HepG2 (cell line): ENCODE measurements at regions of chr3 and their contacts with region 1.

Region 1: GRCh38 chr3:140736863-140737460 is 59.1 kb downstream of the TRIM42 start:
- DNase-seq: peak; percentile 59
- ATAC-seq: peak; percentile 97
- H3K4me3 ChIP-seq: no peak overlapping the region
- H3K27ac ChIP-seq: no peak overlapping the region
- H3K4me1 ChIP-seq: 0 out of 2 replicates have a peak, but pooled peaks cover 12% of the 10 kb centered on the region
- H3K27me3 ChIP-seq: no peaks in the 10 kb centered on the region; a peak in 1 of 5 replicates
- CTCF ChIP-seq: peak; percentile 92
- EP300 ChIP-seq: no peak
- POLR2A ChIP-seq: no peak
- RAD21 ChIP-seq: peak; percentile 95

Region 2: DNA sequence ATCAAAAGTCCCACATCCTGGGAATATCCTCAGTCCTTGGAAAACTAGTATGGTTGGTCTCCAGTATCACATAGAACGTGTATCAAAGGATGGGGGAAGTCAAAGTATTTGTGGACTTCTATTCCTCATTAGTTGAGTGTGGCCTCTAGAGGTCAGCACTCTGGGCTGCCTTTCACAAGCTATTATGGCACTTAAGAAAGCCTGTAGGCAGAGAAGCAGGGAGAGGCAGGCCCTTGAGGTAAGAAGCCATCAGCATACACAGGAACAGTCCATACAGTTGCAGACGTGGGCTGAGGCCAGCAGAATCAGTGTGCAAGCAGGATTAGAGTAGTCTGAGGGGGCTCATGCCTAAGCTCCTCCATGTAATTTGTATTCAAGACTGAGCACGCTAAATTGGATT is 460.3 kb before region 1 on chr3:
- CTCF ChIA-PET with region 1: interaction called, 3 read pairs
- POLR2A ChIA-PET with region 1: no interaction called
- in situ Hi-C with region 1: no loop called
- intact Hi-C with region 1: loop called (anchors 1 kb)
- DNase-seq: peak; percentile 9
- ATAC-seq: peak; percentile 58
- H3K4me3 ChIP-seq: no peak overlapping the region
- H3K27ac ChIP-seq: no peak overlapping the region
- H3K4me1 ChIP-seq: no peaks in the 10 kb centered on the region
- H3K27me3 ChIP-seq: 0 out of 5 replicates have a peak, but pooled peaks cover 0 to 4% of the 10 kb centered on the region in 2 experiments
- CTCF ChIP-seq: peak; percentile 48
- EP300 ChIP-seq: no peak
- POLR2A ChIP-seq: no peak
- RAD21 ChIP-seq: no peak

Region 3: DNA sequence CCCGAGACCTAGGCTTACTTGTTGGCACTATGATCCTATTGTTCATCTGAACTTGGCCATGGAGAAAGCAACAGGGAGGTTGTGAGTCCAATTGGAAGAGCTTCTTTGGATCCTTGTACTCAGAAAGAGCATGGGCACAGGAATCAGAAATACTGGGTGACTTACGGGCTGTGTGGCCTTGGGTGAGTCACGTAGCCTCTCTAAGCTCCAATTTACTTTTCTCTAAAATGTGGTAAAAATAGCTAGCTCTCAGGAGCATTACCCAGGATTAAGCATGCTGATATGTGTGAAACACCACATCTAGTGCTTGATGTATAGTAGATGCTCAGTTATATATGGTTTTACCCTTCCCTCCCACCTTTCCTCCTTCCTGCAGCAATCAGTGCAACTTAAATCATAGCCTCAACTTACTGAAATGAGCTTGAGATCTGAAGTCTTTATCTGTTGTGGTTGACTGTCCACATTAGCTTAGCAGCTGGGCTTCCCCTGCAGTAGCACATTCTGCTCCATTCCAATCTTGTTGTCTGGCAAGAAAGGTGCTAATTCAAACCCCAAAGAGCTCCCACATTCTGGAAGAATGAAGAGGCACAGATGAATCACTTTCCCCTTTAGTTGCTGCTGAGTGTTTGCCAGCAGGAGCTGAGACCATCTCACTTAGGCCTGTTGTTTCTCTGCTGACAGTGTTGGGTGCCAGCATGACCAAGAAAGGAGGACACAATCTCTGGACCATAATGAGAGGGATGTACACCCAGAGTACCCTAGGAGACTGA is 358.2 kb before region 1 on chr3:
- CTCF ChIA-PET with region 1: no interaction called
- POLR2A ChIA-PET with region 1: no interaction called
- in situ Hi-C with region 1: no loop called
- intact Hi-C with region 1: loop called (anchors 5 kb)
- DNase-seq: no peak
- ATAC-seq: no peak
- H3K4me3 ChIP-seq: no peak overlapping the region
- H3K27ac ChIP-seq: no peak overlapping the region
- H3K4me1 ChIP-seq: no peaks in the 10 kb centered on the region
- H3K27me3 ChIP-seq: no peaks in the 10 kb centered on the region
- CTCF ChIP-seq: no peak
- EP300 ChIP-seq: no peak
- POLR2A ChIP-seq: no peak
- RAD21 ChIP-seq: no peak

Region 4: DNA sequence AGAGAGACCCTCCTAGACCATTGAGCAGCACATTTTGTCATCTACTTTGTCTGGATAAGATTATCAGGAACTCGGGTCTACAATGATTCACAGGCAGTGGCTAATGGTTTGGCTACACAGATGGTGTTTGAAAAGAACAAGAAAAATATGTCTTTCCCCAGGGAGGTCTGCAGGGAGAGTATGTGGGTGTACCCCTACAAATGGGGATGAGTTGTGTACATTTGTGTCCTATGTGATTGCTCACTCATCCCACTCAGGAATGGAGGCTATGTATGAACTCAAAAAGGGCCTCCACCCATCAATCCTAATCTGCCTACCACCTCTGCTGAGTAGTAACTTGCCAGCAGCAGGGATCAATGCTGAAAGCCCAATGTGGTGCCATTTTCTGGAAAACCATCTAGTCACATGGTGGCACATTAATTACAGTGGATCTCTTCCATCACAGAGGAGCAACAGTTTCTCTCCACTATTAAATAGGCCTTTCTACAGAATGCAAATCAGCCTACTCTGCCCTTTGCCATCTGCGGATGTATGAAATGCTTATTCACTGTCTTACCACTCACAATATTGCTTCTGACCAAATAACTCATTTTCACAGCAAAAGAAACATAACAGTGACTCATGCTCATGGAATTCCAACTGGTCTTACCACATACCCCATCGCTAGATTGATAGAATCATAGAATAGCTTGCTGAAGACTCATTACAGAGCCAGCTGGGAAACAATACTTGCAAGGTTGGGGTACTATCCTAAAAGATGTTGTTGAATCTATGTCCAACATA is 107.4 kb before region 1 on chr3:
- CTCF ChIA-PET with region 1: interaction called, 3 read pairs
- POLR2A ChIA-PET with region 1: no interaction called
- in situ Hi-C with region 1: loop called (anchors 10 kb)
- intact Hi-C with region 1: no loop called
- DNase-seq: peak; percentile 17
- ATAC-seq: no peak
- H3K4me3 ChIP-seq: no peak overlapping the region
- H3K27ac ChIP-seq: no peak overlapping the region
- H3K4me1 ChIP-seq: no peaks in the 10 kb centered on the region
- H3K27me3 ChIP-seq: no peaks in the 10 kb centered on the region
- CTCF ChIP-seq: no peak
- EP300 ChIP-seq: no peak
- POLR2A ChIP-seq: no peak
- RAD21 ChIP-seq: no peak

Region 5: GRCh38 chr3:140703496-140703895 is 33.5 kb before region 1 on chr3:
- CTCF ChIA-PET with region 1: no interaction called
- POLR2A ChIA-PET with region 1: no interaction called
- in situ Hi-C with region 1: no loop called
- intact Hi-C with region 1: no loop called
- DNase-seq: no peak
- ATAC-seq: no peak
- H3K4me3 ChIP-seq: no peak overlapping the region
- H3K27ac ChIP-seq: no peak overlapping the region
- H3K4me1 ChIP-seq: peaks cover 53% of the 10 kb centered on the region
- H3K27me3 ChIP-seq: no peaks in the 10 kb centered on the region
- CTCF ChIP-seq: no peak
- EP300 ChIP-seq: no peak
- POLR2A ChIP-seq: no peak
- RAD21 ChIP-seq: no peak

Region 6: DNA sequence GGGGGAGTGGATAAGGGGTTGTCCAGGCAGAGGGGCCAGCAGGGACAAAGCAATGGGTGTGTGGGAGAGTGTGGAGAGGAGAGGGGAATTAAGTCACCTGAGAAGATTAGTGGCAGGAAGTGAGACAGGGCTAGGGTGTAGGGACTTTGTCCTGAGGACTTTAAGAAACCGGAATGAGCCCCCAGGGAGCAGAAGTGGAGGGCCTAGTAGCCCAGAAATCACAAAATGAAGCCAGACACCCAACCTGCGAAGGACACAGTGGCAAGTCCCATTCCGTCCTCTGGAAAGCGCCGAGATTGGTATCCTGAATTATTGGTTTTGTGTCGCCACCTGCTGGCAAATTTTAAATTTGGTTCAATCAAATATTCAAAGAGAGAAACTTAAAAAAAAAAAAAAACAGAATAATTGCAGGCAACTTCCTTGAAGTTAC is 126.6 kb after region 1 on chr3:
- CTCF ChIA-PET with region 1: interaction called, 8 read pairs
- POLR2A ChIA-PET with region 1: no interaction called
- in situ Hi-C with region 1: no loop called
- intact Hi-C with region 1: loop called (anchors 10 kb)
- DNase-seq: peak; percentile 49
- ATAC-seq: peak; percentile 82
- H3K4me3 ChIP-seq: no peak overlapping the region
- H3K27ac ChIP-seq: no peak overlapping the region
- H3K4me1 ChIP-seq: no peaks in the 10 kb centered on the region
- H3K27me3 ChIP-seq: peaks cover 0 to 2% of the 10 kb centered on the region in 2 experiments; a peak in 1 of 5 replicates
- CTCF ChIP-seq: peak; percentile 64
- EP300 ChIP-seq: no peak
- POLR2A ChIP-seq: no peak
- RAD21 ChIP-seq: peak; percentile 38; the same call in 1 of the 2 replicates